Natural killer cell (primary cell): ENCODE measurements at regions of chr22 and their contacts with region 1.

Region 1: DNA sequence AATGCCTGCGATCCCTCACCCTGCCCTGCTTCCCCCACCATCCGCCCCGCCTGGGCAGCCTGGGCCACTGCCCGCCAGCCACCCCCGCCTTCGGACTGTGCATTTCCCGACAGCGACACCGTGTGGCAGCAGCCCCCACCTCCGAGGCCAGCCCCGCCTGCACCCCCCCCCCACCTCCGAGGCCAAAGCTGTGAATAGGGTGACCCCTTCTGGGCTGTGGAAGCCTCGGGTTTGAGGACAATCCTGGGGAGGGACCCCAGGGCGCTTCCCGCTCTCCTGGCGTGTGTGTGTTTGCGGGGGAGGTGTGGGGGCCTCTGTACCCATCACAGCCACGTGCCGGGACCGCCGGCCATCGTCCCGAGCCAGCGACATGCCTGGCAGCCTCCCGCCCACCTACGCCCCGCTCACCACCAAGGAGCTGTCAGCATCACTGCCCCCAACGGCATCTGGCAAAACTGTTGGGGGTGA is 33.8 kb upstream of the PPARA start:
- DNase-seq: peak; percentile 87 to 91
- ATAC-seq: peak; percentile 96 to 98 (median 96)
- H3K4me3 ChIP-seq: no peak overlapping the region
- H3K4me3 Mint-ChIP-seq: no peak overlapping the region
- H3K27ac ChIP-seq: no peak overlapping the region
- H3K27ac Mint-ChIP-seq: peak overlapping the region in 1 of 2 donors; percentile 51
- H3K4me1 ChIP-seq: peaks cover 10% of the 10 kb centered on the region
- H3K4me1 Mint-ChIP-seq: peaks cover 0 to 13% of the 10 kb centered on the region in 2 donors
- H3K27me3 ChIP-seq: no peaks in the 10 kb centered on the region
- H3K27me3 Mint-ChIP-seq: no peaks in the 10 kb centered on the region
- CTCF ChIP-seq: peak; percentile 74

Region 2: DNA sequence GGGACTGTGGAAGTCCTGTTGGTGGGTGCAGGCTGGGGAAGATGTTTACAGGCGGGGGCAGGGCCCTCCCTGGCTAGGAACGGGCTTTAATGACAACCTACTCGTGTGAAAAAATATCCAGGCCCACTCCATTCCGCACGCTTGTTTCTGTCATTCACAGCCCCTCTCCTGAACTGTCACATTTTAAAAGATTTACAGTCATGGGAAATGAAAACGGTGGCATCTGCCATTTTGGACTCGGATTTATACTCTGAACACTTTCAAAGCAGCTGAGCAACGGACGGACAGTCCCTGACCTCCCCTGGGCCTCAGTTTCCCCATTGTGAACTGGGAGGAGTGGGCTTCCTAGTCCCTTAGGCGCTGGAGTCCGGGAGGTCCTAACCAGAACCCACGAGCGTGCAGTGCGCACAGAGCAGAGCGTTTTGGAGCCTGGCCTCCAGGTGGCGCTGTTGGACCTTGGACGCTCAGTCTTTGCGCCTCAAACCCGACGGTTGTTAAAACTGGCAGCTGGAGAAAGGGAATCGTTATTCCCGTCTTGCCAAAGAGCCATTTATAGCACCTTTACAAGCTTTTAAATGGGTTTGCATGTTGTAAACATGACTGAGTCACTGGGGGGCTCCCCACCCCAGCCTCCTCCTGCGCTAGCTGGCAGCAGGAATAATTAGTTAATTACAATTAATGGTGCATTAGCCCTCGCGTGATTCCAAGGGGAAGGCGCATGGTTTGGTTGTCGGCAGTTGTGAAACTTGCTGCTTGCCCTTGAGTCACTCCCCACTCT is 538.6 kb before region 1 on chr22:
- intact Hi-C with region 1: loop called (anchors 1 kb)
- DNase-seq: peak; percentile 73 to 85
- ATAC-seq: peak; percentile 77 to 86 (median 85)
- H3K4me3 ChIP-seq: no peak overlapping the region
- H3K4me3 Mint-ChIP-seq: no peak overlapping the region
- H3K27ac ChIP-seq: no peak overlapping the region
- H3K27ac Mint-ChIP-seq: no peak overlapping the region
- H3K4me1 ChIP-seq: peaks cover 18% of the 10 kb centered on the region
- H3K4me1 Mint-ChIP-seq: peaks cover 0 to 8% of the 10 kb centered on the region in 2 donors
- H3K27me3 ChIP-seq: peaks cover 2% of the 10 kb centered on the region
- H3K27me3 Mint-ChIP-seq: peaks cover 0 to 8% of the 10 kb centered on the region in 2 donors
- CTCF ChIP-seq: peak; percentile 92

Region 3: DNA sequence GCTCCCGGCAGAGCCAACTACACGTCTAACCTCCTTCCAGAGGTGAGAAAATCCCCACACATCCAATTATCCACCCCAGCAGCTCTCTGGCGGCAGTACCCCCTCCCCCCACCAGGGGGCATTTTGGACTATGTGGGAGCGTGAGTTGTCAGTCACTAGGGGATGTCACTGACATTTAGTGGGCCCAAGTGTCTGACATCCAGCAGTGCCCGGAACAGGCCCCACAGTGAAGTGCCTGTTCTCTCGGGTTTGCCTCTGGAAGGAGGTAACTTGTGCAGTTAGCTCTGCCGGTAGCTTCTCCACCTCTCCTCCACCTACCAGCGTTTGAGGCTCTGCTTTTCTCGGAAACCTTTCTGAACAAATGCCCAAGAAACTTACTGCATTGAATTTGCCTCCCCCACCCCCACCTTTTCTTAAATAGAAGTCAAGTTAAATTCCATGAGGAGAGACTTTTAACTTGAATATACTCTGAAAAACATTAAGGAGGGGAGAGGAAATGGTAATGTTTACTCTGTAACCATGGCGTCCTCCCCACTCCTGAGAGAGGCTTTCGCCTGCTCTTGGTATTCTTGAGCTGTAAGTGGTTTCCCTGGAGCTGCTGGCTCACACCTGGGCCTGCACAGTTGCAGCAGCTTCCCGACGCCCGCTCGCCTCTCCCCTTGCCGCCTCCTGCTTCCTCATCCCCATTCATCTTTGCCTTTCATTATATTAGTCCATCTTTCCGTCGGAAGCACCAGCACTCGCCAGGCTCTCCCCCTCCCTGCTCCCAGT is 252.4 kb before region 1 on chr22:
- intact Hi-C with region 1: loop called (anchors 1 kb)
- DNase-seq: peak; percentile 66 to 71
- ATAC-seq: peak; percentile 79 to 88 (median 84)
- H3K4me3 ChIP-seq: no peak overlapping the region
- H3K4me3 Mint-ChIP-seq: no peak overlapping the region
- H3K27ac ChIP-seq: no peak overlapping the region
- H3K27ac Mint-ChIP-seq: no peak overlapping the region
- H3K4me1 ChIP-seq: peaks cover 8% of the 10 kb centered on the region
- H3K4me1 Mint-ChIP-seq: peaks cover 6 to 20% of the 10 kb centered on the region in 2 donors
- H3K27me3 ChIP-seq: peaks cover 18% of the 10 kb centered on the region
- H3K27me3 Mint-ChIP-seq: peaks cover 33 to 36% of the 10 kb centered on the region in 2 donors
- CTCF ChIP-seq: peak; percentile 93

Region 4: DNA sequence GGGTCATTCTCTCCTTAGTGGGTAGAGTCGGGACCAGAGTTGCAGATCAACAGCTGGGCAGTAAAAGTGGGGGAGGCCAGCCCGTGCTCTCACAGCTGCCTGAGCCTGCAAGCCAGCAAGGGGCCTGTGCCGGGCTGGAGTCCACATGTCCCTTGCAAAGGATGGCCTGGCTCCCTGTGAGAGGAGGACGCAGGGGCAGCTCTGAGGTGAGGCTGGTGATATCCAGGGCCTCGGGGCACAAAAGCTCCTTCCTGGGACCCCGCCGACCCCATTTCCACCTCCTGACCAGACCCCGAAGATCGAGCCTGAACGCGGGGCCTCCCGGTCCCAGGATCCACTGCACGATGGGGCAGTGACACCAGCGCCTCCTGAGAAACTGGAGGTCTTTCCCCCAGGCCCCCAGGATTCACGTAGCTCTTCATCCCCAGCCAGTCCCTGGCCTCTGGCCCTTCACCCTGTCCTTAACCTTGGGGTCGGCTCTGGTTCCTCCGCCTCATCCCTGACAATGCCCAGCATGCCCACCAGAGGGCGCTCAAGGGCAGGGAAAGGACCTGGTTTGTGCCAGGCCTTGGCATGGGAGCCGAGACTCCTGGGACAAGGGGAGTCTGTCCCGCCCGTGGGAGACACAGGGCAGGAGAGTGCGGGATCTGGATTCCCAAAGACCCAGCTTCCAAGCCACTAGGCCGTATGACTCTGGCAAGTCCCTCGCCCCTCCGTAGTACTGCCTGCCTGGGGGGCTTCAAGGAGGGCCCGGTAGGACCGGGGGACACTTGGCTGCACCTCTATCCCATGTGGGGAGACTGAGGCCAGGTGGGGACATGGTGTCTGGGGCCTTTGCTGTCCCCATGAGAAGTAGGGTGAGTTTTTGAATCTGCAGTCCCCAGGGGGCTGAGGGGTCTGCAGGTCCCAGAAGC is 121.8 kb before region 1 on chr22:
- intact Hi-C with region 1: loop called (anchors 1 kb)
- DNase-seq: peak; percentile 77 to 82
- ATAC-seq: peak; percentile 61 to 70 (median 66)
- H3K4me3 ChIP-seq: no peak overlapping the region
- H3K4me3 Mint-ChIP-seq: peak overlapping the region; percentile 21
- H3K27ac ChIP-seq: peak overlapping the region; percentile 56
- H3K27ac Mint-ChIP-seq: peak overlapping the region; percentile 68 to 84
- H3K4me1 ChIP-seq: peaks cover 44% of the 10 kb centered on the region
- H3K4me1 Mint-ChIP-seq: peaks cover 14 to 36% of the 10 kb centered on the region in 2 donors
- H3K27me3 ChIP-seq: no peaks in the 10 kb centered on the region
- H3K27me3 Mint-ChIP-seq: peaks cover 0 to 2% of the 10 kb centered on the region in 2 donors
- CTCF ChIP-seq: peak; percentile 95

Region 5: DNA sequence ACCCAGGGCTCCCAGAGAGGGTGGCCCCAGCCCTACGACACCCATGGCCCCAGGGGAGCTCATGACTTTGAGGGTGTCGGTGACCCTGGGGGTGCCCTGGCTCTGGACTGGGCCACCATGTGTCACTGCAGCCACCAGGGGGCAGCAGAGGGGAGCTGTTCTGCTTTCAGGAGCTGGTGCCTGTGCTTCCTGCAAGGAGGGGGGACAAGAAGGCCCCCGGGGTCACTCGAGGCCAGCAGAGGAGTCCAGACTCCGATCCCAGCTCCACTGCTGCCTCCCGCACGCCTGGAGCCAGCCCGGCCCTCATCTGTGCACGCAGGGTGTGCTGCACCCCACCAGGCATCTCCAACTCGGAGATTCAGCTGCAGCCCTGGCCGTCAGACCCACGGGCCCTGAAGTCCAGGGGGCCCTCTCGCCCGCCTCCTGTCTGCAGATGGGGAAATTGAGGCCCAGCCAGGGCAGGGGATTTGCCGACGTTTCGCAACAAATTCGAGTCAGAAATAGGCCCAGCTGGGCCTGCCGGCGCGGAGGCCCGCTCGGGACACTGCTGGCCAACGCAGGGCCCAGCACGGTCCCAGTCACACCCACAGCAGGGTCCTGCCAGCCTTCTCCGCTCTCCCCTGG is 110.0 kb before region 1 on chr22:
- intact Hi-C with region 1: loop called (anchors 1 kb)
- DNase-seq: peak; percentile 88 to 93
- ATAC-seq: peak; percentile 65 to 85 (median 72)
- H3K4me3 ChIP-seq: no peak overlapping the region
- H3K4me3 Mint-ChIP-seq: no peak overlapping the region
- H3K27ac ChIP-seq: no peak overlapping the region
- H3K27ac Mint-ChIP-seq: peak overlapping the region in 1 of 2 donors; percentile 73
- H3K4me1 ChIP-seq: peaks cover 39% of the 10 kb centered on the region
- H3K4me1 Mint-ChIP-seq: peaks cover 13 to 27% of the 10 kb centered on the region in 2 donors
- H3K27me3 ChIP-seq: no peaks in the 10 kb centered on the region
- H3K27me3 Mint-ChIP-seq: no peaks in the 10 kb centered on the region
- CTCF ChIP-seq: peak; percentile 91